Heart left ventricle (tissue), 16 donors: ENCODE measurements at regions of chr9 and their contacts with region 1.

Region 1: DNA sequence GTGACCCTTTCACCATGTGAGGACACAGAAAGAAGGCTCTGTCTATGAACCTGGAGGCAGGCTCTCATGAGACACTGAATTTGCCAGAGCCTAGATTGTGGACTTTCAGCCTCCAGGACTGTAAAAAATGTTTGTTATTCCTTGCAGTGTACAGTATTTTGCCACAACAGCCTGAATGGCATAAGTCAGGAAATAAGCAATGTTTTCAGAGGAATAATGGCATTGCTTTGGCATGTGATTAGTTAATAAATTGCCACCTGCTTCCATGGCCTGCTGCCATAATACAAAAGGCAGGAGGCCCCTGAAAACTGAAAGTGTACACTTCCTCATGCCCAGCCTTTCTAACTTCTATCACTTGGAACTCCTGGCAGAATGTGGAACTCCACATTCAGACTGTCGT is 408.1 kb downstream of the GADD45G start:
- DNase-seq: no peak
- ATAC-seq: no peak
- H3K4me3 ChIP-seq: no peak overlapping the region
- H3K27ac ChIP-seq: no peak overlapping the region
- H3K4me1 ChIP-seq: peaks cover 0 to 12% (median 0%) of the 10 kb centered on the region in 12 donors
- H3K27me3 ChIP-seq: no peaks in the 10 kb centered on the region
- CTCF ChIP-seq: no peak
- POLR2A ChIP-seq: no peak

Region 2: GRCh38 chr9:90086101-90086511 is 73.2 kb after region 1 on chr9:
- intact Hi-C with region 1: loop called in 2 of 10 experiments (anchors 10 kb)
- DNase-seq: peak in 1 of 5 donors; percentile 53
- ATAC-seq: peak; percentile 43 to 65 (median 58)
- H3K4me3 ChIP-seq: no peak overlapping the region
- H3K27ac ChIP-seq: peak overlapping the region in 1 of 12 donors; percentile 70
- H3K4me1 ChIP-seq: no peaks in the 10 kb centered on the region
- H3K27me3 ChIP-seq: peaks cover 0 to 3% (median 0%) of the 10 kb centered on the region in 9 donors
- CTCF ChIP-seq: no peak
- POLR2A ChIP-seq: no peak